Left colon (tissue), 2 donors: ENCODE measurements at regions of chr4 and their contacts with region 1.

Region 1: GRCh38 chr4:150242820-150243458 is 164.7 kb downstream of the DCLK2 start:
- DNase-seq: peak in 1 of 2 donors; percentile 41
- ATAC-seq: peak; percentile 68

Region 2: GRCh38 chr4:150010525-150011126 is 232.3 kb before region 1 on chr4:
- intact Hi-C with region 1: loop called in 1 of 2 experiments (anchors 10 kb)
- DNase-seq: peak in 1 of 2 donors; percentile 49
- ATAC-seq: peak; percentile 91

Region 3: GRCh38 chr4:150082241-150082640 is 160.7 kb before region 1 on chr4:
- intact Hi-C with region 1: no loop called
- DNase-seq: no peak
- ATAC-seq: no peak